K562 (cell line): ENCODE measurements at regions of chr1 and their contacts with region 1.

Region 1: DNA sequence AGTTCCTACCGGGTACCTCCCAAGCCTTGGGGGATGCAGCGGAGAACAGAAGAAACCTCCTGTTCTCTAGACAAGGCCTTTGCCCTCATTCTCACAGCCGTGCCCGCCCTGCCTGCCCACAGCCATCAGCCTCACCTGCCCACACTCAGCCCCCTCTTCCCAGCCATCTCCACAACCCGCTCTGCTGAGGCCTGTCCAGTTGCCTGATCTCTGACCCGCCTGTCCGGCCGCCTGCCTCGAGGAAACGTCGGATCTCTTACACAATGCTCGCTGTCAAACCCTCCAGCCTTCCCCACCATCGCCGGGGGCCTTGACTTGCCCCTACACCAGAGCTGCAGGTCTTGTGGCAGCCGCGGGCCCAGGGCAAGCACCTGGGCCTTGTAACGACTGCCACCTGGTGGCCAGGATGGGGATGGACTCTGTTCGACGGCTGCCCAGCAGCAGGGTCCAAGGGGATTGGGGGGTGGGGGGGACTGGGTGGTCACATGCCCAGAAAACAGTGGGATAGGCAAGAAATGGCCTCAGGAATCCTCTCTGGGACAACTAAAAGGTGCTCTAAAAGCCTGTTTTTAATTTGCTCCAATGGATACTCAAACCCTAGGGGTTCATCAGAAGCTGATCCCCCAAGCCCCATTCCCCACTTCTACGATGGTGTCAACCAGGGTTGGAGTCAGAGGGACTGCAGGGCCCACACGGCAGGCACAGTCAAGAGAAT is 31.0 kb downstream of the SLC45A1 start:
- DNase-seq: peak; percentile 76 to 94 (median 90)
- ATAC-seq: peak; percentile 85
- H3K4me3 ChIP-seq: no peak overlapping the region
- H3K27ac ChIP-seq: no peak overlapping the region
- H3K4me1 ChIP-seq: peaks cover 0 to 25% of the 10 kb centered on the region in 2 experiments; a peak in 2 of 5 replicates
- H3K27me3 ChIP-seq: peaks cover 22 to 46% of the 10 kb centered on the region in 2 experiments
- CTCF ChIP-seq: peak; percentile 83 to 93 (median 93)
- EP300 ChIP-seq: no peak
- POLR2A ChIP-seq: no peak
- RAD21 ChIP-seq: peak; percentile 88 to 92

Region 2: DNA sequence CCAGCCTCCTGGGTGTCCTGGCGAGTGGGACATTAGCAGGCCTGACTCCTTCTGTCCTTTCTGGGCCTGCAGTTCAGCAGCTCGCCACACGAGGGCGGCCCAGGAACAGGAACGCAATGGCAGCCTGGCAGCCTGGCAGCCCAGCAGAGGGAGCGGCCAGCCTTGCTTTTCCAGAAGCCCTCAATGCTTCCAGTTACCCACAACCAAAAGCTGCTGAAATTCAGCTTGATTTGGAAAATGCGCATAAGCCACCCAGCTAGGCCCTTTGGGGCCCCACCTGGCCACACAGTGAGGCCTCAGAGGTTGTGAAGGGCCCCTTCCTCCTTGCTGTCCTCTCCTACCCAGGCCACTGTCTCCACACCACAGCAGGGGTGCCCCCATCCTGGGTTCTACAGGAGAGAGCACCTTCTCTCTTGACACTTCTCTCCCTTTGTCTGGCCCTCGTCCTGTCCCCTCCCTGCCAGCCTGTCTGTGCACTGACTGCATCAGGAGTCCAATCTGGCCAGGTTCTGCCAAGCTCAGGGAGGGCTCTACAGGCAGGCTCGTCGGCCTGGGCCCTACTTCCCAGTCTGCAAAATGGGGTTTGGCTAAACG is 681.2 kb before region 1 on chr1:
- CTCF ChIA-PET with region 1: interaction called, 8 read pairs
- POLR2A ChIA-PET with region 1: no interaction called
- in situ Hi-C with region 1: no loop called
- intact Hi-C with region 1: loop called (anchors 5 kb)
- DNase-seq: peak; percentile 82 to 85 (median 84)
- ATAC-seq: peak; percentile 85
- H3K4me3 ChIP-seq: no peak overlapping the region
- H3K27ac ChIP-seq: no peak overlapping the region
- H3K4me1 ChIP-seq: peaks cover 0 to 35% of the 10 kb centered on the region in 2 experiments; a peak in 2 of 5 replicates
- H3K27me3 ChIP-seq: peaks cover 27 to 58% of the 10 kb centered on the region in 2 experiments; a peak in 4 of 5 replicates
- CTCF ChIP-seq: peak; percentile 99
- EP300 ChIP-seq: no peak
- POLR2A ChIP-seq: no peak
- RAD21 ChIP-seq: peak; percentile 94 to 98

Region 3: DNA sequence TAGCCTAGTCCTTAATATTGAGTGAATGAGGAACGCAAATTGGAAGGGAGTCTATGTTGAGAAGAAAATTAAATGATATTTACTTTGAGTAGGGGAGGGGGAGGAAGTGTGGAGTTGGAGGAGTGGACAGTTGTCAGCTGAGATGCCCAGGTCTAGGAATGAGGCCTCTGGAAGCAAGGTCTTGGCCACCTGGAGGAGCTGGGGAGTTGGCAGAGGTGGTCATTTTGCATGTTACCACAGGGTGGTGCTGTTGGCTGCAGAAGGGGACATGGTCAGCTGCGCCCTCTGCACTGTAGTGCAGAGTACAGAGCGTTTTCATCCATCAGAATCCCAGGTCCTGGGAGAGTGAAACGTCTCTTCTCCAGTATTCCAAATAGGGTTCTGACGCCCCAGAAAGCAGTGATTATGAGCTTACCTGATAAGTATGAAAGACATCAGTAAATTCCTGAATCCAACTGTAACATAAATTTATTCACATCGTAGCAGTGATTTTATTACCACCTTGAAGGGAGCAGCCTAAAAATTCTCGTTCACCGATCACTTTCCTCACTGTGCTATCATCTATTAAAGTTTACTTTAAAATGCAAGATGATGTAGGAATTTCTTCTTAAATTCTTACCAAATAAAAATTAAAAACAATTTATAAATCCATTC is 373.6 kb before region 1 on chr1:
- CTCF ChIA-PET with region 1: interaction called, 35 read pairs
- POLR2A ChIA-PET with region 1: interaction called, 3 read pairs
- in situ Hi-C with region 1: no loop called
- intact Hi-C with region 1: no loop called
- DNase-seq: peak; percentile 83 to 87 (median 86)
- ATAC-seq: peak; percentile 100
- H3K4me3 ChIP-seq: no peak overlapping the region
- H3K27ac ChIP-seq: no peak overlapping the region
- H3K4me1 ChIP-seq: no peaks in the 10 kb centered on the region
- H3K27me3 ChIP-seq: no peaks in the 10 kb centered on the region
- CTCF ChIP-seq: peak; percentile 98 to 100 (median 99)
- EP300 ChIP-seq: no peak
- POLR2A ChIP-seq: no peak
- RAD21 ChIP-seq: peak; percentile 79 to 89

Region 4: GRCh38 chr1:7983086-7983778 is 365.7 kb before region 1 on chr1:
- CTCF ChIA-PET with region 1: interaction called, 11 read pairs
- POLR2A ChIA-PET with region 1: no interaction called
- in situ Hi-C with region 1: no loop called
- intact Hi-C with region 1: loop called (anchors 1 kb)
- DNase-seq: no peak
- ATAC-seq: no peak
- H3K4me3 ChIP-seq: no peak overlapping the region
- H3K27ac ChIP-seq: no peak overlapping the region
- H3K4me1 ChIP-seq: no peaks in the 10 kb centered on the region; a peak in 1 of 5 replicates
- H3K27me3 ChIP-seq: no peaks in the 10 kb centered on the region
- CTCF ChIP-seq: no peak
- EP300 ChIP-seq: no peak
- POLR2A ChIP-seq: no peak
- RAD21 ChIP-seq: no peak

Region 5: DNA sequence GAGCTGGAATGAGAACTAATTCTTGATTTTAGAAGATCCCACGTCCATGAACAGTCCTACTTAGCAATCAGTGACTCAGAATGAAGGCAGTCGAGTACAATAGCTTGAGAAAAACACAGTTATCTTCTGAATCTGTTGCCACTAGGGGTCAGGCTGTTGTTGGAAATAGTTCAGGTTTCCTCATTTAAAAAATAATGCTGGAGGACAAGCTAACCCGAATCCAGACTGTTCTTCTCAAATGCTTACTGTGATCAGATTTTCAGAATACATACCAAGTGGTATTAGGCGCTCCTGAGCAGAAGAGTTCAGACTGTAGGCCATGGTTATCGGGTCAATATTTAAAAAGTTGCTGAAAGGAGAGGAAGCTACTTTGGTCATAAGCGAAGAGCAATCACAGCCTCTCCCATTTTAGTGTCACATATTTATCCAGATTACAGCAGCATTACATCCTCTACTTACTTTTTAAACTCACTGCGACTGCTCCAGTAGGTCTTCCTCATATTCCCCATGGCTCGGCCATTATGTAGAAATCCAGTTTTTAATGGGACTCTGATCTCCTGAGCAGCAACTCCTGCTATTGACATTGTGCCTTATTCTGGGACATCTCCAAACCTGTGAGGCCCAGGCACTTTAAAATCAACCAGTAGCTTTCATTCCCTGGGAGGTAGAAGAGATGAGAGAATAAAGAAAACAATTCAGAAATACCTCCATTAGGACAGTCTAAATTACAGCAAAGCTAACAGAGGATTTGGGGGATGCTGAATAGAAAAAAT is 333.7 kb before region 1 on chr1:
- CTCF ChIA-PET with region 1: interaction called, 14 read pairs
- POLR2A ChIA-PET with region 1: no interaction called
- in situ Hi-C with region 1: no loop called
- intact Hi-C with region 1: loop called (anchors 1 kb)
- DNase-seq: peak; percentile 62 to 79 (median 64)
- ATAC-seq: peak; percentile 93
- H3K4me3 ChIP-seq: no peak overlapping the region
- H3K27ac ChIP-seq: no peak overlapping the region
- H3K4me1 ChIP-seq: peaks cover 0 to 7% of the 10 kb centered on the region in 2 experiments; a peak in 1 of 5 replicates
- H3K27me3 ChIP-seq: peaks cover 0 to 2% of the 10 kb centered on the region in 2 experiments; a peak in 2 of 5 replicates
- CTCF ChIP-seq: peak; percentile 77 to 93 (median 85)
- EP300 ChIP-seq: no peak
- POLR2A ChIP-seq: no peak
- RAD21 ChIP-seq: peak; percentile 84 to 97

Region 6: DNA sequence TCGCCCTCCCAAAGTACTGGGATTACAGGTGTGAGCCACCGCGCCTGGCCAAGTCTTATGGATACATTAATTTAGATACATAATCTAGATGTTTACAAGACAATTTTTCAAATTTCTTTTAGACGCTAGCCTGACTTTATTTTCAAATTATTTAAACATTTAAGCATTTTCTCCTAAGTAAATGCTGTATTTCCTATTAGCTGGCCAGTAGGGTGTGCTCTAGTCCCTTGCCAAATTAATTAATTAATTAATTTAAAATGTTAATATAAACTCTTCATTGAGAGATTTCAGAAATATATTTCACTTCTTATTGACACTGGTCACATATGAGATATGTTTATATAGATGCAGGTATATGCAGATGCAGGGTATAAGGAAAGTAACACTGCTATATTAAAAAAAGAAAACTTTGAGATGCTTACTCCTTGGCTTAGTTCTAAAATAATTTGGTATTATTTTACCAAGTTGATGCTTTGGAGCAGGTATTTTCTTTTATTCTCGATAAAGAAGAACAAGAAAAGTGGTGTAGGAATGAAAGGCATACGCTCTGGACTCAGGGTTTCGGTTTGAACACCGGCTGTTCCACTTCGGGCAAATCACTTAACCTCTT is 317.7 kb before region 1 on chr1:
- CTCF ChIA-PET with region 1: interaction called, 31 read pairs
- POLR2A ChIA-PET with region 1: no interaction called
- in situ Hi-C with region 1: no loop called
- intact Hi-C with region 1: loop called (anchors 1 kb)
- DNase-seq: peak in 2 of 4 experiments; percentile 38 to 42
- ATAC-seq: no peak
- H3K4me3 ChIP-seq: no peak overlapping the region
- H3K27ac ChIP-seq: no peak overlapping the region
- H3K4me1 ChIP-seq: peaks cover 0 to 5% of the 10 kb centered on the region in 2 experiments; a peak in 4 of 5 replicates
- H3K27me3 ChIP-seq: peaks cover 17 to 31% of the 10 kb centered on the region in 2 experiments; a peak in 4 of 5 replicates
- CTCF ChIP-seq: peak in 2 of 3 experiments; percentile 57 to 91; a peak in 4 of 6 replicates
- EP300 ChIP-seq: no peak
- POLR2A ChIP-seq: no peak
- RAD21 ChIP-seq: peak; percentile 89 to 94

Region 7: DNA sequence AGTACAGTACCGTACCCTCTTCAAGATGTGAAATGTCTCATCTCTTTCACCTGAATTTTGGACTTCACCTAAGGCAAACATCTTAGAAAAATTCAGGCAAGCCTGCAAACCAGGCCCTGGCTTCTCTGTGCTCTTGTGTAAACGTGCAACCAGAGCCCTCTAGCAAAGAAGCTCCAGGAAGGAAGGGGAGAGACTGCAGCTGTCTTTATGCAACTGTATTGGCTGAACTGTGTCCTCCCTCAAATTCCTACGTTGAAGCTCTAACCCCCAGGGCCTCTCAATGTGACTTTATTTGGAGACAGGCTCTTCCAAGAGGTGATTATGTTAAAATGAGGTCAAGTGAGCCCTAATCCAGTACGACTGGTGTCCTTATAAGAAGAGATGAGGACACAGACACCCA is 29.2 kb after region 1 on chr1:
- CTCF ChIA-PET with region 1: no interaction called
- POLR2A ChIA-PET with region 1: no interaction called
- in situ Hi-C with region 1: no loop called
- intact Hi-C with region 1: no loop called
- DNase-seq: no peak
- ATAC-seq: no peak
- H3K4me3 ChIP-seq: no peak overlapping the region
- H3K27ac ChIP-seq: no peak overlapping the region
- H3K4me1 ChIP-seq: no peaks in the 10 kb centered on the region
- H3K27me3 ChIP-seq: no peaks in the 10 kb centered on the region
- CTCF ChIP-seq: no peak
- EP300 ChIP-seq: no peak
- POLR2A ChIP-seq: no peak
- RAD21 ChIP-seq: no peak

Region 8: GRCh38 chr1:8629241-8630091 is 280.5 kb after region 1 on chr1:
- CTCF ChIA-PET with region 1: no interaction called
- POLR2A ChIA-PET with region 1: no interaction called
- in situ Hi-C with region 1: no loop called
- intact Hi-C with region 1: no loop called
- DNase-seq: no peak
- ATAC-seq: no peak
- H3K4me3 ChIP-seq: no peak overlapping the region
- H3K27ac ChIP-seq: no peak overlapping the region
- H3K4me1 ChIP-seq: peaks cover 7 to 14% of the 10 kb centered on the region in 2 experiments; a peak in 3 of 5 replicates
- H3K27me3 ChIP-seq: no peaks in the 10 kb centered on the region
- CTCF ChIP-seq: no peak
- EP300 ChIP-seq: no peak
- POLR2A ChIP-seq: no peak
- RAD21 ChIP-seq: no peak